ENCODE measurements at regions of chr2 and their contacts with region 1.

Region 1: DNA sequence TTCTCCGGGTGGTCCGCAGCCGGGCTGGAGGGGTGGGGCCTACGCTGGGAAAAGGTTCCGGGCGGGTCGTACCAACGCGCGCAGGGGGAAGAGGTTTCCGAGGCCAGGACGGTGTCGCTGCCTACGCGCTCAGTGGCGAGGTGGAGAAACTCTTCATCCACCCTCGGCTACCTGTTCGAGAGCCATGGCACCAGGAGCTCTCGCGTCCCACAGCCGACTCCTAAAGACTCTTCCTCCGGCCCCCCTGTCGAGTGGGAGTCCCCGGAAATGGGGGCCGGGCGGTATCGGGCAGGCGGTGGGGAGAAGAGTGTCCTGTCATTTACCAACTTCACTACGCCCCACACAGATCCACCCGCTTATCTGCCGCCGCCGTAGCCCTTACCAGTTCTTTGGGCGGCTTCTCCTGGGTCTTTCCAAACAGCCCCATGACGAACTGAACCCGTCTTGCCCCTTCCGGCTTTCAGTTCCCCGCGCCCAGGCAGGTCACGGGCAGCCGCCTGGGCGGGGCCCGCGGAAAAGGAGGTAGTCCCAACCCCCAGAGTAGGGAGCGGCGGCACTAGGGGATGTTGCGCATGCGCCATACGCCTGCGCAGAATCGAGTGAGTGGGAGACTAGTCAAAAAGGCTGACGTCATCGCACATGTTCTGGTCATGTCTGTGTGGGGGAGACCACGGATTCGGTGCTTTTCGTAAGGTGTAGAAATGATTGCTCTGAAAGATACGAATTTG is at the start of gene CHMP3:
- DNase-seq: peak; percentile 97 to 98 (median 98)
- H3K4me3 ChIP-seq: peak within 1 kb of the TSS; percentile 85 to 91
- H3K4me3 Mint-ChIP-seq: peak within 1 kb of the TSS; percentile 95 to 98 (median 98)
- H3K27ac ChIP-seq: peak within 1 kb of the TSS; percentile 99
- H3K27ac Mint-ChIP-seq: peak within 1 kb of the TSS; percentile 94 to 99 (median 99)
- H3K4me1 ChIP-seq: peaks cover 42% of the 10 kb centered on the region
- H3K4me1 Mint-ChIP-seq: peaks cover 0 to 38% (median 31%) of the 10 kb centered on the region in 4 donors
- H3K27me3 ChIP-seq: no peaks in the 10 kb centered on the region
- H3K27me3 Mint-ChIP-seq: peaks cover 0 to 4% of the 10 kb centered on the region in 2 donors
- total RNA-seq, gene CHMP3: 83.3 to 83.6 TPM

Region 2: GRCh38 chr2:86195055-86195807 is 367.9 kb before region 1 on chr2 and contains the start of gene IMMT:
- CTCF ChIA-PET with region 1: no interaction called
- POLR2A ChIA-PET with region 1: no interaction called
- intact Hi-C with region 1: loop called (anchors 5 kb)
- DNase-seq: peak; percentile 92 to 95 (median 95)
- H3K4me3 ChIP-seq: peak within 1 kb of the TSS; percentile 27 to 100
- H3K4me3 Mint-ChIP-seq: peak within 1 kb of the TSS; percentile 90 to 97 (median 96)
- H3K27ac ChIP-seq: peak within 1 kb of the TSS; percentile 89
- H3K27ac Mint-ChIP-seq: peak within 1 kb of the TSS; percentile 83 to 98 (median 96)
- H3K4me1 ChIP-seq: peaks cover 57% of the 10 kb centered on the region
- H3K4me1 Mint-ChIP-seq: peaks cover 34 to 75% (median 55%) of the 10 kb centered on the region in 4 donors
- H3K27me3 ChIP-seq: no peaks in the 10 kb centered on the region
- H3K27me3 Mint-ChIP-seq: no peaks in the 10 kb centered on the region
- total RNA-seq, gene IMMT: 77.2 to 82.7 TPM

Region 3: DNA sequence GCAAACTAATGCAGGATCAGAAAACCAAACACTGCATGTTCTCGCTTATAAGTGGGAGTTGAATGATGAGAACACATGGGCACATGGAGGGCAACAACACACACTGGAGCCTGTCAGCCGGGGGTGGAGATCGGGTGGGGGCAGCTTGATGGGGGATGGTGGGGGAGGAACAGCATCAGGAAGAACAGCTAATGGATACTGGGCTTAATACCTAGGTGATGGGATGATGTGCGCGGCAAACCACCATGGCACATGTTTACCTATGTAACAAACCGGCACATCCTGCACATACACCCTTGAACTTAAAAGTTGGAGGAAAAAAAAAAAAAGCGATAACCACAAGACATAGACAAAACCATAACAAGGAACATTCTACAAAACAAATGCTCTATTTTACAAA is 10.2 kb before region 1 on chr2:
- CTCF ChIA-PET with region 1: no interaction called
- POLR2A ChIA-PET with region 1: interaction called, 42 read pairs
- intact Hi-C with region 1: loop called (anchors 1 kb)
- DNase-seq: peak in 4 of 5 donors; percentile 52 to 59 (median 54)
- H3K4me3 ChIP-seq: no peak overlapping the region
- H3K4me3 Mint-ChIP-seq: peak overlapping the region; percentile 78 to 89 (median 82)
- H3K27ac ChIP-seq: no peak overlapping the region
- H3K27ac Mint-ChIP-seq: peak overlapping the region; percentile 52 to 92 (median 90)
- H3K4me1 ChIP-seq: peaks cover 45% of the 10 kb centered on the region
- H3K4me1 Mint-ChIP-seq: peaks cover 22 to 50% (median 34%) of the 10 kb centered on the region in 4 donors
- H3K27me3 ChIP-seq: no peaks in the 10 kb centered on the region
- H3K27me3 Mint-ChIP-seq: no peaks in the 10 kb centered on the region

Region 4: GRCh38 chr2:86584151-86584913 is 21.2 kb after region 1 on chr2:
- CTCF ChIA-PET with region 1: no interaction called
- POLR2A ChIA-PET with region 1: interaction called, 39 read pairs
- intact Hi-C with region 1: loop called (anchors 1 kb)
- DNase-seq: peak; percentile 26 to 48 (median 35)
- H3K4me3 ChIP-seq: no peak overlapping the region
- H3K4me3 Mint-ChIP-seq: peak overlapping the region in 6 of 8 donors; percentile 31 to 74 (median 59)
- H3K27ac ChIP-seq: no peak overlapping the region
- H3K27ac Mint-ChIP-seq: peak overlapping the region; percentile 73 to 95 (median 84)
- H3K4me1 ChIP-seq: peaks cover 24% of the 10 kb centered on the region
- H3K4me1 Mint-ChIP-seq: peaks cover 17 to 28% (median 22%) of the 10 kb centered on the region in 4 donors
- H3K27me3 ChIP-seq: no peaks in the 10 kb centered on the region
- H3K27me3 Mint-ChIP-seq: peaks cover 0 to 1% of the 10 kb centered on the region in 2 donors

Region 5: DNA sequence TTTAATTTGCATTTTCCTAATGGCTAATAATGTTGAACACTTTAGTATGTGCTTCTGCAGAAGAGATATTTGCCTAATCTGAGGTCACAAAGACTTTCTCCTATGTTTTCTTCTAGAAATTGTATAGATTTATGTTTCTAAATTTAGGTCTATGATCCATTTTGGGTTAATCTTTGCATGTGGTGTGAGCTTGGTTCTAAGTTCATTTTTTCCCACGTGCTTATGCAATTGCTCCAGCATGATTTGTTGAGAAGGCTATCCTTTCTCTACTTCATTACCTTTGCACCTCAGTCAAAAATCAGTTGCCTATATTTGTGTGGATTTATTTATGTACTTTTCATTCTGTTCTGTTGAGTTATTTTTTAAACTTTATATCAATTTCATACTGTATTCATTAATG is 75.6 kb after region 1 on chr2:
- CTCF ChIA-PET with region 1: no interaction called
- POLR2A ChIA-PET with region 1: no interaction called
- intact Hi-C with region 1: no loop called
- DNase-seq: no peak
- H3K4me3 ChIP-seq: no peak overlapping the region
- H3K4me3 Mint-ChIP-seq: no peak overlapping the region
- H3K27ac ChIP-seq: no peak overlapping the region
- H3K27ac Mint-ChIP-seq: no peak overlapping the region
- H3K4me1 ChIP-seq: no peaks in the 10 kb centered on the region
- H3K4me1 Mint-ChIP-seq: no peaks in the 10 kb centered on the region
- H3K27me3 ChIP-seq: no peaks in the 10 kb centered on the region
- H3K27me3 Mint-ChIP-seq: peaks cover 0 to 1% of the 10 kb centered on the region in 2 donors

Region 6: GRCh38 chr2:86649119-86649947 is 86.2 kb after region 1 on chr2:
- CTCF ChIA-PET with region 1: no interaction called
- POLR2A ChIA-PET with region 1: no interaction called
- intact Hi-C with region 1: no loop called
- DNase-seq: no peak
- H3K4me3 ChIP-seq: no peak overlapping the region
- H3K4me3 Mint-ChIP-seq: peak overlapping the region in 1 of 8 donors; percentile 13
- H3K27ac ChIP-seq: no peak overlapping the region
- H3K27ac Mint-ChIP-seq: no peak overlapping the region
- H3K4me1 ChIP-seq: no peaks in the 10 kb centered on the region
- H3K4me1 Mint-ChIP-seq: no peaks in the 10 kb centered on the region
- H3K27me3 ChIP-seq: no peaks in the 10 kb centered on the region
- H3K27me3 Mint-ChIP-seq: peaks cover 8 to 16% of the 10 kb centered on the region in 2 donors